Right ventricle myocardium inferior (tissue), 1 donor: ENCODE measurements at regions of chr15 and their contacts with region 1.

Region 1: GRCh38 chr15:91852741-91853510 is 582 bp upstream of the SLCO3A1 start:
- DNase-seq: peak; percentile 93
- ATAC-seq: peak; percentile 84

Region 2: DNA sequence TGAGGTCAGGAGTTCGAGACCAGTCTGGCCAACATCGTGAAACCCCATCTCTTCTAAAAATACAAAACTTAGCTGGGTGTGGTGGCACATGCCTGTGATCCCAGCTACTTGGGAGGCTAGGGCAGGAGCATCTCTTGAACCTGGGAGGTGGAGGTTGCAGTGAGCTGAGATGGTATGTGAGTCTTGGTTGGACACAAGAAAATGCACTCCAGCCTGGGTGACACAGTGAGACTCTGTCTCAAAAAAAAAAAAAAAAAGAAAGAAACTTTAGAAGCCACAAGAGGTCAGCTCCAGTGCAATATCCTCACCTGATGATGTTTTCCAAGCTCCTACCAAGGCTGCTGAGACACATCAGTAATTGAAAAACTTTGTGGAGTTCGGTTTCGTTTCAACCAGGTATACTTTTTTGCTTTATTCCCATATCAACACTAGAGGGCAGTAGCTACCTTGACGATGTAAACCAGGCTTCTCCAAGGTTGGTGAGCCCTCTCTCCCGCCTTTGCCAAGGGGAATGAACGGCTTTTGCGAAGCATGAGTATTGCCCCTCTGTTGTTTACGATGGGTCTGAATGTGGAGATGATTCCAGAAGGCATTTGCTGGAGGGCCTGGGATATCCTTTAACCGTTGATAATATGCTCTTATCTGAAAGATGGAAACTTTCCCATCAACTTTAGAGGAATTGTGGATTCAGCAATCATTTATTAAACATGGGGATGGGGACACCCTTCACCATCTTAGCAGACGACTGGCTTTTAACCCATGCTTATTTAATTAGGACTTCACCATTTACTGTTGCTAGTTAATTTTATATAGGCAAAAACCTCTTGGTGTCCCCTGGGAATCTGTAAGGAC is 550.1 kb before region 1 on chr15:
- intact Hi-C with region 1: loop called (anchors 2 kb)
- DNase-seq: no peak
- ATAC-seq: peak; percentile 84

Region 3: GRCh38 chr15:91522663-91523332 is 330.1 kb before region 1 on chr15:
- intact Hi-C with region 1: loop called (anchors 10 kb)
- DNase-seq: no peak
- ATAC-seq: peak; percentile 34

Region 4: DNA sequence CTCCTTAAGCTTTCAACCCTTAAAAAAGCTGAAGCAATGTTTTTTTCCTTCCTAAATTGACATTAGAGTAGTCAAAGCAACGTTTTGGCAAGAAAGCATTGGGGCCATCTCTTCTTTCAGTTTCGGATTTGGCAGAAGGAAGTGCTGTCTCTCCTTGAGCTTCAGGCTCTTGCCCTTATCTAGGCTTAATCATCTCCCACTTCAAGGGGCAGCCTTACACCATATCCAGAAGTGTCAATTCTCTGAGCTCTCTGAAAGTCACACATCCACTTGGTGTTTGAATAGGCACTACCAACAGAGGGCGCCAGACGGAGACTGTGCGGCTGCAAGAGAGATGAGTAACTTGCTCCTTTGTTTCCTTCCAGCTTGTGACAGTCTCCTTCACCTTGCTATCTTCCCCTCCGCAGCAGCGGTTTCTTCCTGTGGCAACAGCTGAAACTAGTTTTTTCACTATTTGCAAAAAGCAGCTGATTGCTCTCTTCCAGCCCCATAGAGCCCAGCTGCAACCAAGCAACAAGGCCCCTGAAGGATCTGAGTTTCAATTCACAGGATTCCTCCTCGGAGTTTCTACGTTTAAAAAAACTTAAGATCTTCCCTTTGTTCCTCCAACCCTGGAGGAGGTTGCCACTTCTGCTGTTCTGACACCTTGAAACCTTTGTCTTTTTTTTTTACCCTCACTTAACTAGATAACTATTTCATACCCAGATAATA is 146.4 kb before region 1 on chr15:
- intact Hi-C with region 1: loop called (anchors 2 kb)
- DNase-seq: peak; percentile 81
- ATAC-seq: peak; percentile 89

Region 5: DNA sequence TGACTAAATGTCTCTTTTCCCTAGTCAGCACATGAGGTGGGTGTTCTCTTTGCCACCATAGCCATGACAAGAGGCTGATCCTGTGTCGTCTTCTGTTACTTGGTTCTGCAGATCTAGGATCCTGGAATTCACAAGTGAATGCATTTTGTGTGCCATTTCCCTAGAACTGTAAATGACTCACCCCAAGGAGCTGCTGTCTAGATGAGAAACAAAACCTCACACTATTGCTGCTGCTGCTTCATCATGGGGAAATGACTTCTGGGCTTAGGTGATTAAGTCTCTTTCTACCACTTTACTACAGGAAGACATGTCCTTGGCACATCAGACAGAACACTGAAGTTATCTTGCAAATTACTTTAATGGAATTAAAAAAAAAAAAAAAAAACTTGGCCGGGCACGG is 55.5 kb after region 1 on chr15:
- intact Hi-C with region 1: no loop called
- DNase-seq: no peak
- ATAC-seq: no peak

Region 6: GRCh38 chr15:91942676-91943576 is 90.0 kb after region 1 on chr15:
- intact Hi-C with region 1: loop called (anchors 2 kb)
- DNase-seq: peak; percentile 90
- ATAC-seq: peak; percentile 88

Region 7: GRCh38 chr15:91970142-91970541 is 117.2 kb after region 1 on chr15:
- intact Hi-C with region 1: loop called (anchors 5 kb)
- DNase-seq: peak; percentile 90
- ATAC-seq: peak; percentile 89

Region 8: GRCh38 chr15:92077353-92078085 is 224.6 kb after region 1 on chr15:
- intact Hi-C with region 1: loop called (anchors 1 kb)
- DNase-seq: no peak
- ATAC-seq: peak; percentile 73